BJ (cell line): ENCODE measurements at regions of chr17 and their contacts with region 1.

Region 1: GRCh38 chr17:38674749-38675615 is at the start of gene EPOP:
- DNase-seq: no peak
- H3K4me3 ChIP-seq: peak within 1 kb of the TSS; percentile 50
- H3K27me3 ChIP-seq: peaks cover 25% of the 10 kb centered on the region
- CTCF ChIP-seq: no peak
- polyA plus RNA-seq, gene EPOP: 0.52 and 0.55 TPM in 2 replicates

Region 2: GRCh38 chr17:38687286-38687685 is 12.3 kb after region 1 on chr17:
- CTCF ChIA-PET with region 1: interaction called, 14 read pairs
- POLR2A ChIA-PET with region 1: no interaction called
- DNase-seq: no peak
- H3K4me3 ChIP-seq: no peak overlapping the region
- H3K27me3 ChIP-seq: peaks cover 3% of the 10 kb centered on the region; the same call in 1 of the 2 replicates
- CTCF ChIP-seq: no peak

Region 3: GRCh38 chr17:38729886-38730525 is 55.0 kb after region 1 on chr17 and contains the start of gene CISD3:
- CTCF ChIA-PET with region 1: interaction called, 87 read pairs
- POLR2A ChIA-PET with region 1: no interaction called
- DNase-seq: peak; percentile 20
- H3K4me3 ChIP-seq: peak within 1 kb of the TSS; percentile 63
- H3K27me3 ChIP-seq: no peaks in the 10 kb centered on the region
- CTCF ChIP-seq: no peak; the same call in 1 of the 2 replicates
- polyA plus RNA-seq, gene CISD3: 15.1 and 17.1 TPM in 2 replicates

Region 4: GRCh38 chr17:38735161-38735997 is 60.4 kb after region 1 on chr17:
- CTCF ChIA-PET with region 1: interaction called, 87 read pairs
- POLR2A ChIA-PET with region 1: no interaction called
- DNase-seq: no peak
- H3K4me3 ChIP-seq: no peak overlapping the region
- H3K27me3 ChIP-seq: no peaks in the 10 kb centered on the region
- CTCF ChIP-seq: peak; percentile 93

Region 5: DNA sequence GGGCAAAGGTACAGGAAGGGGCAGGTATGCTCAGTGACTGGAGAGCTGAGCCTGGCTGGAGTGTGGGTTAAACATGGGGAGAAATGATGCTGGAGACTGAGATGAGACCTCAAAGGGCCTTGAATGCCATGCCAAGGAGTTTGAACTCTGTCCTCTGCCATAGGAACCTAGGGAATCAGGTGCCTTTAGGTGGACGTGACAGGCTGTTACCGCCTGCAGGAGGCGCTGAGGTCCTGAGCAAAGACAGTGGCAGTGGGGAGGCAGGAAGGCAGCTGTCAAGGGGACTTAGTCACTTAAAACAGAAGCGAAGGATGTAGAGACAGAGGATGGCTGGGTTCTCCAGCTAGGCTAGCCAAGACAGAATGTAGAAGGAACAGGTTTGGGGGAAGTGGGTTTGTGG is 86.6 kb after region 1 on chr17:
- CTCF ChIA-PET with region 1: no interaction called
- POLR2A ChIA-PET with region 1: no interaction called
- DNase-seq: no peak
- H3K4me3 ChIP-seq: no peak overlapping the region
- H3K27me3 ChIP-seq: no peaks in the 10 kb centered on the region
- CTCF ChIP-seq: peak; percentile 42; the same call in 1 of the 2 replicates